Ovary (tissue), 10 donors: ENCODE measurements at regions of chr1 and their contacts with region 1.

Region 1: GRCh38 chr1:156583821-156584622 is 4.5 kb downstream of the TTC24 start:
- DNase-seq: peak; percentile 54 to 82 (median 61)
- H3K4me3 ChIP-seq: no peak overlapping the region
- H3K27ac ChIP-seq: no peak overlapping the region
- H3K4me1 ChIP-seq: no peaks in the 10 kb centered on the region
- H3K27me3 ChIP-seq: no peaks in the 10 kb centered on the region
- CTCF ChIP-seq: peak; percentile 65 to 93 (median 79)
- EP300 ChIP-seq: no peak
- POLR2A ChIP-seq: no peak

Region 2: DNA sequence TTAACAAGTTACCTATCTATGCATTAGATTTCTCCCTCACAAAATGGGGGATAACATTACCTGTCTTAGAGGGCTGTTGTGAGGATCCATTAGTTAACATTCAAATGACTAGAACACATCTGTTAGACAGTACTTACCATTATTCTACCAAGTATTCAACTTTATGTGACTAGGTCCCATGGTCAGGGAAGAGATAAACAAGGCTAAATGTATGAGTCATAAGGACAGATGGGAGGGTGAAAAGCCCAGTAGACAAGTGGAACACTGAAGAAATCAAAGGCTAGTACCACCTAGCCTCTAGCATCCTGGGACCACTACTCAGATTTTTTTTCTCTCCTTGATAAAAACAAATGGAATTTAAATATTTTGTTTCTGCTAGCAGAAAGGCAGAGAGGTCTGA is 275.9 kb before region 1 on chr1:
- intact Hi-C with region 1: no loop called
- DNase-seq: no peak
- H3K4me3 ChIP-seq: no peak overlapping the region
- H3K27ac ChIP-seq: no peak overlapping the region
- H3K4me1 ChIP-seq: no peaks in the 10 kb centered on the region
- H3K27me3 ChIP-seq: no peaks in the 10 kb centered on the region
- CTCF ChIP-seq: no peak
- EP300 ChIP-seq: no peak
- POLR2A ChIP-seq: no peak

Region 3: GRCh38 chr1:156461781-156462647 is 122.0 kb before region 1 on chr1:
- intact Hi-C with region 1: loop called in 1 of 4 experiments (anchors 5 kb)
- DNase-seq: no peak
- H3K4me3 ChIP-seq: no peak overlapping the region
- H3K27ac ChIP-seq: no peak overlapping the region
- H3K4me1 ChIP-seq: peaks cover 18% of the 10 kb centered on the region
- H3K27me3 ChIP-seq: no peaks in the 10 kb centered on the region
- CTCF ChIP-seq: no peak
- EP300 ChIP-seq: no peak
- POLR2A ChIP-seq: no peak

Region 4: GRCh38 chr1:156510709-156511108 is 73.3 kb before region 1 on chr1:
- intact Hi-C with region 1: loop called in 1 of 4 experiments (anchors 5 kb)
- DNase-seq: peak; percentile 89 to 99 (median 91)
- H3K4me3 ChIP-seq: no peak overlapping the region
- H3K27ac ChIP-seq: peak overlapping the region; percentile 31 to 56
- H3K4me1 ChIP-seq: peaks cover 15% of the 10 kb centered on the region
- H3K27me3 ChIP-seq: no peaks in the 10 kb centered on the region
- CTCF ChIP-seq: no peak
- EP300 ChIP-seq: peak; percentile 78
- POLR2A ChIP-seq: no peak

Region 5: GRCh38 chr1:156601122-156601830 is 17.3 kb after region 1 on chr1 and contains the start of gene GPATCH4:
- intact Hi-C with region 1: loop called in 1 of 4 experiments (anchors 2 kb)
- DNase-seq: peak; percentile 76 to 86 (median 80)
- H3K4me3 ChIP-seq: peak within 1 kb of the TSS; percentile 59
- H3K27ac ChIP-seq: peak within 1 kb of the TSS; percentile 39 to 55
- H3K4me1 ChIP-seq: peaks cover 4% of the 10 kb centered on the region
- H3K27me3 ChIP-seq: no peaks in the 10 kb centered on the region
- CTCF ChIP-seq: no peak
- EP300 ChIP-seq: no peak
- POLR2A ChIP-seq: no peak
- total RNA-seq, gene GPATCH4: 11.1 to 45.1 (median 22.8) TPM

Region 6: DNA sequence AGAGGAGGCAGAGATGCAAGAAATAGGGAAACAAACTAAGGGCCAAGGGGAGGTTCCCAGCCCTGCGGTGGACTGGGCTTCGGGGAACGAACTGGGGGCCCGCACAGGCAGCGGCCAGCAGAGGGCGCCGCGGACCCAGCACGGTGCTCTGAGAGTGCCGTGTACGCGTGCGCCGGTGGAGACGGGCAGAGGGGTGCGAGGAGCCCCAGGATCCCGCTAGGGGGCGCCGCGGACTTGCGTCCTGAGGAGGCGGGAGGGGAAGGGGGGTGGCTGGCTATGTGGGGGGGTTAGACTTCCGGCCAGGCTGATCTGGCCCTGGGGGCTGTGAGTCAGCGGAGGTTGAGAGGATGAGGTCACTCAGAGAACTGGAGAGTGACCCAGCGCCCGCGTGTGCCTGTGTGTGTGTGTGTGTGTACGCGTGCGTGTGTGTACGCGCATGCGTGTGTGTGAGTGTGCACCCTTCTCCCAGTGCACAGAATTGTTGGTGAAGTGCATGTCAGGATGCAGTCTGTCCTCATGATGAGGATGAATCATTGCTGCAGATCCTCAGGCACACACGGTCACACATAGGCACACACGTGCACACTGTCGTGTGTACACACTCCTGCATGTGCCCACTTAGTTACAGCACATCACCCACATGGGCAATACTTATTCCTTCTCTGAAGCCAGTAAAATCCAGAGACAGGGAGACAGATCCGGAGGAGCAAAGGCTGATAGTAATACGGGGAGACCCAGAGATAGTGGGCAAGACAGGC is 76.2 kb after region 1 on chr1:
- intact Hi-C with region 1: loop called in 1 of 4 experiments (anchors 10 kb)
- DNase-seq: peak; percentile 97 to 98 (median 97)
- H3K4me3 ChIP-seq: no peak overlapping the region
- H3K27ac ChIP-seq: peak overlapping the region; percentile 22 to 52
- H3K4me1 ChIP-seq: no peaks in the 10 kb centered on the region
- H3K27me3 ChIP-seq: no peaks in the 10 kb centered on the region
- CTCF ChIP-seq: peak; percentile 88 to 97 (median 97)
- EP300 ChIP-seq: no peak
- POLR2A ChIP-seq: peak; percentile 10

Region 7: GRCh38 chr1:156801409-156802121 is 217.5 kb after region 1 on chr1:
- intact Hi-C with region 1: no loop called
- DNase-seq: no peak
- H3K4me3 ChIP-seq: no peak overlapping the region
- H3K27ac ChIP-seq: no peak overlapping the region
- H3K4me1 ChIP-seq: peaks cover 6% of the 10 kb centered on the region
- H3K27me3 ChIP-seq: no peaks in the 10 kb centered on the region
- CTCF ChIP-seq: no peak
- EP300 ChIP-seq: no peak
- POLR2A ChIP-seq: no peak